H1 (cell line): ENCODE measurements at regions of chr1 and their contacts with region 1.

Region 1: DNA sequence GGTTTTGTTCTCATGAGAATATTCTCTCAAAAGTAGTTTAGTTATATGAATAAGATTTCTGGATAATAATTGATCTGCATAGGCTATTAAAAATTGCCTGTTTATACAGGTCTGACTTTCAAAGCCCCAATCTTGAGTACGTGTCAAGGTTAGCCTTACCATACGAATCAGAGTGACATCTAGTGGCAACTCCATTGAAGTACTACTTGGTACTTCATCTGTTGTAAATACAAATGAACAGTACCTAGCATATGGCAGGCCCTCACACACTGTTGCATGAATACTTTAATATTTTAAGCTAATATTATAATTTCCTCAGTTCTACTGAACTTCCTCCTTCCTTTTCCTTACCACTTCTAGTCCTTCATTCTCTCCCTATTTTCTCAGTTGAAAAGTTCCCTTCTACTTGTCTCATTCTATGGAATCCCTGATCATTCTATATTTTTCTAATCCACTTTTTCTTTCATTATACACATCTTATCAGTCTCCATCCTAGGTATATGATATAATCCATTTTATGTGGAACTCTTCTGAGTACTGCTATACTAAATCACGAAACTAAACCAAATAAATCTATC is 101.2 kb downstream of the AKT3 start:
- DNase-seq: no peak
- H3K4me3 ChIP-seq: no peak overlapping the region
- H3K27ac ChIP-seq: no peak overlapping the region
- H3K4me1 ChIP-seq: peaks cover 0 to 8% (median 2%) of the 10 kb centered on the region in 4 experiments; a peak in 3 of 7 replicates
- H3K27me3 ChIP-seq: no peaks in the 10 kb centered on the region
- CTCF ChIP-seq: peak in 2 of 3 experiments; percentile 62 to 75; a peak in 3 of 4 replicates
- EP300 ChIP-seq: no peak
- POLR2A ChIP-seq: no peak
- RAD21 ChIP-seq: peak; percentile 83 to 88

Region 2: GRCh38 chr1:243475966-243476365 is 272.8 kb before region 1 on chr1:
- CTCF ChIA-PET with region 1: interaction called, 12 read pairs
- POLR2A ChIA-PET with region 1: interaction called, 3 read pairs
- DNase-seq: peak in 1 of 2 experiments; percentile 71
- H3K4me3 ChIP-seq: no peak overlapping the region
- H3K27ac ChIP-seq: no peak overlapping the region
- H3K4me1 ChIP-seq: peaks cover 12 to 37% (median 24%) of the 10 kb centered on the region in 4 experiments
- H3K27me3 ChIP-seq: no peaks in the 10 kb centered on the region; a peak in 1 of 7 replicates
- CTCF ChIP-seq: peak; percentile 55 to 75 (median 66)
- EP300 ChIP-seq: no peak
- POLR2A ChIP-seq: no peak
- RAD21 ChIP-seq: peak; percentile 88 to 92

Region 3: DNA sequence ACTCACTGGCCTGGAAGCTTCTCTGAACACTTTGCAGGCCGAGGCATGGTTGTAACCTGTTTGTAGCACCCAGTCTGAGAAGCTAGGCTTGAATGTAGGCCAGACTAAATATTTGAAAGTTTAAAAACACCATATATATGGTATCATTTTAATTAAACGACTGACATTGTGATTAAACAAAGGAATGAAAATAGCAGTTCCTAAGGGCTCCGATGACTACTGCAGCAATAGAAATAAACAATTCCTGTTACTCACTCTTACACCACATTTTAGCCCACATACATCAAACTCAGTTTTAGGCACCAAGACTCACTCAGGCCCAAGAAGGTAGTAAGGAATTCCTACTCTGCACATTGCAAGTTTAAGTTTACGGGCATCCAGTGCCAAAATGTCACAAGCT is 180.0 kb before region 1 on chr1:
- CTCF ChIA-PET with region 1: no interaction called
- POLR2A ChIA-PET with region 1: no interaction called
- DNase-seq: no peak
- H3K4me3 ChIP-seq: no peak overlapping the region
- H3K27ac ChIP-seq: no peak overlapping the region
- H3K4me1 ChIP-seq: no peaks in the 10 kb centered on the region
- H3K27me3 ChIP-seq: peaks cover 0 to 1% (median 0%) of the 10 kb centered on the region in 4 experiments; a peak in 1 of 7 replicates
- CTCF ChIP-seq: no peak
- EP300 ChIP-seq: no peak
- POLR2A ChIP-seq: no peak
- RAD21 ChIP-seq: no peak

Region 4: DNA sequence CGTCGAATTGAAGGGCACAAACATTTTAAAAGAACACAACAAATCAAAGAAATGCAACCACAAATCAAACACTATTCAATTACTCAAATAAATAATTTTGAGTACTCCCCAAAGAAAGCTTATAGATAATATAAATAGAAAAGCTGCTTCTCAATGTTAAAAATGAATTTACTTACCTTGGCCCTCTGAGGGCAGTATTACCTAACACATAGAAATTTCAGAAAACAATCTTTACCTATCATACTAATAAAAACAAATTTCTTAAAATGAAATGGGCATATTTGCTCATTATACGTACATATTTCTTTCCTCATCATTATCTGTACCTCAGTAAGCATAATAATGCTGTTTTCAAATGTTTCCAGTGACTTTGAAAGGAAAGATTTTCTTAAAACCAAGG is 40.6 kb before region 1 on chr1:
- CTCF ChIA-PET with region 1: interaction called, 20 read pairs
- POLR2A ChIA-PET with region 1: no interaction called
- DNase-seq: no peak
- H3K4me3 ChIP-seq: no peak overlapping the region
- H3K27ac ChIP-seq: no peak overlapping the region
- H3K4me1 ChIP-seq: peaks cover 0 to 3% (median 1%) of the 10 kb centered on the region in 4 experiments; a peak in 2 of 7 replicates
- H3K27me3 ChIP-seq: no peaks in the 10 kb centered on the region
- CTCF ChIP-seq: peak in 1 of 3 experiments; percentile 16; a peak in 1 of 4 replicates
- EP300 ChIP-seq: no peak
- POLR2A ChIP-seq: no peak
- RAD21 ChIP-seq: peak in 1 of 2 experiments; percentile 55; a peak in 3 of 4 replicates

Region 5: DNA sequence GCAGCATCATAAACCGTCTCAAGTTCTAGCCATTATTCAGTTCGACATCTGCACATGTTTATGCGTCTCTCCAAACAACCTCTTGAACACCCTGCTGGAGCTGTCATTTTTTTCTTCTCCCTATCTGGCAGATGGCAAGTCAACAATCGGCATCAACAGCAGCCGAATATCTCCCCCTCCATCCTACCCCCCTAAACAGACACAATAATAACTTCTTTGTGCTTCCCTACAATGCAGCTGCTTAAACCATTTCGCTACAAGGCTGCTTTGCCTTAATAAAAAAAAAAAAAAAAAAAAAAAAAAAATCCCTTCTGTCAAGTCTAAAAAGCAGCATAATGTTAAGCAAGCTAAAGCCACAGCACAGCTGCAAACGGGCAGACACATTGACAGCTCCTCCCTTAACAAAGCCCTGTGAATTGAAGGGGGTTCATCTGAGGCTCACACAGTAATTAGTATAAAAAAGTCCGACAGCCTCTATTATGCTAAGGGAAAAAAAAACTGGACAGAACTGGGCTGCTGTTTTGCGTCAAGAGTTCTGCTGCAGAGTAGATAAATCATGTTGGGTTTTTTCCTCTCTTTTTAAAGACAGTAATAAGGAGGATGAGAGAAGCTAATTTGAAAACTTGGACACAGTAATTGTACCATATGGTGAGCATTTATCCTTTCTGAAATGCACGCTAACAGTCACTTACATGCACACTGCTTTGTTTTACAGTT is 35.2 kb before region 1 on chr1:
- CTCF ChIA-PET with region 1: interaction called, 20 read pairs
- POLR2A ChIA-PET with region 1: no interaction called
- DNase-seq: no peak
- H3K4me3 ChIP-seq: no peak overlapping the region
- H3K27ac ChIP-seq: no peak overlapping the region
- H3K4me1 ChIP-seq: peaks cover 0 to 8% (median 5%) of the 10 kb centered on the region in 4 experiments; a peak in 2 of 7 replicates
- H3K27me3 ChIP-seq: no peaks in the 10 kb centered on the region
- CTCF ChIP-seq: no peak
- EP300 ChIP-seq: no peak
- POLR2A ChIP-seq: no peak
- RAD21 ChIP-seq: no peak

Region 6: GRCh38 chr1:243855616-243856318 is 107.0 kb after region 1 on chr1:
- CTCF ChIA-PET with region 1: no interaction called
- POLR2A ChIA-PET with region 1: no interaction called
- DNase-seq: peak in 1 of 2 experiments; percentile 48
- H3K4me3 ChIP-seq: no peak overlapping the region
- H3K27ac ChIP-seq: no peak overlapping the region
- H3K4me1 ChIP-seq: peaks cover 0 to 4% (median under 1%) of the 10 kb centered on the region in 4 experiments; a peak in 2 of 7 replicates
- H3K27me3 ChIP-seq: no peaks in the 10 kb centered on the region
- CTCF ChIP-seq: no peak
- EP300 ChIP-seq: no peak
- POLR2A ChIP-seq: no peak
- RAD21 ChIP-seq: no peak